Mammary epithelial cell (primary cell): ENCODE measurements at regions of chr15 and their contacts with region 1.

Region 1: DNA sequence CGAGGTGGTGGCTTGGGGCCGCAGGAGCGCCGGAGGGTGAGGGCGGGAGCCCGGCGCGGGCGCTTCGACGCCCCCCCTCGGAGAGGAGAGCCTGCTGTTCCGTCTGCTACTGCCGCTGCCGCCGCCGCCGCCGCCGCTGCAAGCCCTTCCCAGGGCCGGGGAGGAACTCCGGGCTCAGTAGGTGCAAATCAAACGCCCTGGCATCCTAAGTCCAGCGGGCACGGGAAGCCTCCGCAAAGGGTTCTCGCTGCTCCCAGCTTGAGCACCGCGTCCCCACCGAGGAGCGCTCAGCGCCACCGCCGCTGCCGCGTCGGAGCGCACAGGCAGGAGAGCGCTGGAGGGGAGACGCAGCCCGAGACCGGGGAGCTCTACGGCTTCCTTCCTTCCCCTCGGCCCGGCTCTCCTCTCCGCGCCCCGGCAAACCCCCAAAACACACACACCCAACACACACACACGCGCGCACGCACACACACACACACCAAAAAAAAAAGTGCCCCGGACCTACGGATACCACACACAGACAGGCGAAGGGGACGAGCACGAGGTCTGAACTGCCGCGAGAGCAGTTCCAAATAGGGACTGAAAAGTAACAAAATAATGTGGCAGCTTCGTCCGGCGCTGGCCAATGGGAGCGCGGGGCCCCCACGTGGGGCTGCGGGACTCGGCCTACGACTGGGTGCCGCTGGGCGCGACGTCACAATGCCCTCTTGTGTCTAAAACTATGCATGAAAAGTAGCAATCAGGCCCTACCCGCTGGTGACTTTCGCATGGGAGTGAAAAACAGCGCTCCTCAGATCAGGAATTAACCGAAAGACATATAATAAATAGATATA is at the start of gene TLE3:
- DNase-seq: peak; percentile 98
- H3K4me3 ChIP-seq: peak within 1 kb of the TSS; percentile 64 to 98 (median 70)
- H3K27ac ChIP-seq: peak within 1 kb of the TSS; percentile 81
- H3K4me1 ChIP-seq: peaks cover 41% of the 10 kb centered on the region
- H3K27me3 ChIP-seq: peaks cover 8% of the 10 kb centered on the region
- CTCF ChIP-seq: peak; percentile 2 to 43
- total RNA-seq, gene TLE3: 27.6 to 32.0 TPM

Region 2: DNA sequence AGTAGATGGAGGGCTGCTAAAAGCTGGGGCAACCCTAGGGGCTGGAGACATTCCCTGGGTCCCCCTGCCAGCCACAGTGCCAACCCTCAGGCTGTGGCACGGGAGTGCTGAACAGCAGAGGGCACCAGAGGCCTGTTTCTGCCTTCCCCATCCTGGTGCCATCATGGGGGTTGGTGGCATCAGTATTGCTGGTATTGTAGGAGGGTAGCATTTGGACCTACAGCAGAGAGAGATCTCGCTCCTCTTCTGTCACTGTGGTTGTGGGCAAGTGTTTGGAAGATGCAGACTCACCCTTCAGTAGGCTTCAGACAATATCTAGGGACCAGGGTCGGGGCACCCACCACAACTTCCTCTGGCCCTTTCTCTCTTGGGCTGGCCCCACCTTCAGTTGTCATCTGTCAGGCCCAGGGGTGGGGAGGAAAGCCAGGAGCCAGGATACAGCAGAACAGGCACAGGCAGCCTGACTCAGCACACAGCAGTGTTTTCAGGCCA is 521.5 kb before region 1 on chr15:
- CTCF ChIA-PET with region 1: no interaction called
- dilution Hi-C with region 1: no loop called
- in situ Hi-C with region 1: no loop called
- intact Hi-C with region 1: loop called (anchors 1 kb)
- DNase-seq: peak; percentile 19
- H3K4me3 ChIP-seq: no peak overlapping the region
- H3K27ac ChIP-seq: no peak overlapping the region
- H3K4me1 ChIP-seq: no peaks in the 10 kb centered on the region
- H3K27me3 ChIP-seq: no peaks in the 10 kb centered on the region
- CTCF ChIP-seq: peak; percentile 64 to 92

Region 3: DNA sequence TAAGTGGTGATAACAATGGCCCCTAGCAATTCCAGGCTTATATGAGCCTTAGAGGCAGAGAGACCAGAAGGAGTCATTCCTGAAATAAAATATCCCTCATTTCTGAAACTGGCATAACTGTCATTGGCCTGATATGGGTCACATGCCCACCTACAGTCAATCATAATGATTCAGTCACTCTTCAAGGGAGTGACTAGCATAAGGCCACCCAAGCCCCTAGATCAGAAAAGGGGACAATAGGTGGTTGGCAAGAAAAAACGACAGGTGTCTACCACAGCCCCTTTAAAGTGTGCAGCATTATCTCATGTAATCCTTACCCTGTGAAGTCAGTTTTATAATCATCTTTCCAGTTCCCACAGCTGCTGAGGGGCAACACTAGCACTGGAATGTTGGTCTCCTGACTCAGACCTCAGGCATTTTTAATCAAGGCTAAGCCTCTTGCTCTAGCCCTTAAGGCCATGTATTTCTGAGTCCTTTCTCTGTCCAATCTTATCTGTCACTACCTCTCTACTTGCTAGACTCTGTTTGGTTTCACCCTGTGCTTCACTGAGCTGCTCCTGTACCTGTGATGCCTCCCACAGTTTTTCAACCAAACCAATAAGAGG is 171.6 kb before region 1 on chr15:
- CTCF ChIA-PET with region 1: no interaction called
- dilution Hi-C with region 1: no loop called
- in situ Hi-C with region 1: no loop called
- intact Hi-C with region 1: no loop called
- DNase-seq: no peak
- H3K4me3 ChIP-seq: no peak overlapping the region
- H3K27ac ChIP-seq: no peak overlapping the region
- H3K4me1 ChIP-seq: no peaks in the 10 kb centered on the region
- H3K27me3 ChIP-seq: no peaks in the 10 kb centered on the region
- CTCF ChIP-seq: no peak

Region 4: DNA sequence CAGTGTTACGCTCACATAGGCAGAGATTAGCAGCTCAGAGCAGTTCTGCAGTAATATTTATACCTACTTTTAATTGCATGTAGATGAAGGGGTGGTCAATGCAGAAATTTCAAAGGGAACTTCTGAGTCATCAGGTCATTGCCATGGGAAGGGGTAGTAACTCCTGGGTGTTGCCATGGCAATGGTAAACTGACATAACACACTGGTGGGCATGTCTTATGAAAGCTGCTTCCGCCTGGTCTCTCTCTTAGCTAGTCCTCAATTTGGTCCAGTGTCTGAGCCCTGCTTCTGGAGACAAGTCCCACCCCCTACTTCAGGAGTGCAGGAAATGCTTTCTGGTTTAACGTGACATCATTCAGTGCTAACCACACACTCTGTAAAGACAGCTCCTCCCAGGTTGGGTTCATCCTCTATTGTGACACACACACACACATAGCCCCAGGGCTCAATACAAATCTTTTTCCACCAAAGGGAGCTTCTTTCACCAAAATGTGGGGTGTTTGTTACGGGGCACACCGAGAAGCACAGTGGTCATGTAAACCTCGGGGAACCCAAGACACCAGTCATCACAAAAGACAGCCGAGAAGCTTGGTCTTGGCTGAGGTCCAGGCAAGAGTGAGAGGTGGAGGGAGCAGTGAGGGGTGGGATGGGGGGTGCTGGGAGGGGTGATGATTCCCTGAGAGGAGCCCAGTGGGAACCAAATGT is 74.3 kb before region 1 on chr15:
- CTCF ChIA-PET with region 1: no interaction called
- dilution Hi-C with region 1: no loop called
- in situ Hi-C with region 1: no loop called
- intact Hi-C with region 1: loop called (anchors 2 kb)
- DNase-seq: peak; percentile 89
- H3K4me3 ChIP-seq: no peak overlapping the region
- H3K27ac ChIP-seq: peak overlapping the region; percentile 38
- H3K4me1 ChIP-seq: peaks cover 24% of the 10 kb centered on the region
- H3K27me3 ChIP-seq: peaks cover 11% of the 10 kb centered on the region
- CTCF ChIP-seq: no peak

Region 5: GRCh38 chr15:70142322-70143191 is 45.0 kb after region 1 on chr15:
- CTCF ChIA-PET with region 1: no interaction called
- dilution Hi-C with region 1: no loop called
- in situ Hi-C with region 1: no loop called
- intact Hi-C with region 1: no loop called
- DNase-seq: no peak
- H3K4me3 ChIP-seq: no peak overlapping the region
- H3K27ac ChIP-seq: no peak overlapping the region
- H3K4me1 ChIP-seq: no peaks in the 10 kb centered on the region
- H3K27me3 ChIP-seq: peaks cover 8% of the 10 kb centered on the region
- CTCF ChIP-seq: no peak

Region 6: DNA sequence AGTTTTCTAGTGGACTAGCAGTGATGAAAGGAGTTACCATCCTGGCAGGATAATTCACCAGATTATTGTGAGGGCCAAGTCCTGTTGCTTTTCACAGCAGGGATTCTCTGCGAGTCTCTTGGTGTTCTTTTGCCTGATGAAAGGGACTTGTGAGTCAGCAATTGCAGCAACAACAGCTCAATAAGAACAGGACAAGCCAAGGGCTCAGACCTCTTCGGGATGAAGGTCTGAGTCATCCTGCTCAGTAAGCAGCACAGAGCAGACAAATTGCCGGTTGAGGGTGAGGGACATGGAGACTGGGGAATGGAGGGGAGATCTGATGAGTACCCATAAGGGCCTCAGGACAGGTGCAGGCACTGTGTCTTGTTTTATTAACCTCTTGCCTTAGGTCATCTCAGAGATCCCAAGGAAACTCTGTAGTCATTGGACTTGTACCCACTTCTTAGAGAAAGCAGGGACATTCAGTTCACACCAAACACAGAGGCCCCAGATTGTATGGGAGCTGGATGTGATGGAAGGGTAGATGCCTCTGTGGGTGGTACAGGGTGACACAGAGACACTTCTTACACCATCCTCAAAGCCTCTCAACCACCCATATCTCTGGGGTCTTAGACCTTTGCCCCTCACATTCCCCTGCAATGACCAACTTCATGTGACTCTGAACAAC is 174.0 kb after region 1 on chr15:
- CTCF ChIA-PET with region 1: interaction called, 4 read pairs
- dilution Hi-C with region 1: no loop called
- in situ Hi-C with region 1: no loop called
- intact Hi-C with region 1: loop called (anchors 5 kb)
- DNase-seq: peak; percentile 93
- H3K4me3 ChIP-seq: no peak overlapping the region
- H3K27ac ChIP-seq: no peak overlapping the region
- H3K4me1 ChIP-seq: peaks cover 29% of the 10 kb centered on the region
- H3K27me3 ChIP-seq: no peaks in the 10 kb centered on the region
- CTCF ChIP-seq: no peak

Region 7: GRCh38 chr15:70474471-70475396 is 377.2 kb after region 1 on chr15:
- CTCF ChIA-PET with region 1: no interaction called
- dilution Hi-C with region 1: no loop called
- in situ Hi-C with region 1: loop called in 1 of 2 experiments (anchors 25 kb)
- intact Hi-C with region 1: loop called (anchors 2 kb)
- DNase-seq: peak; percentile 98
- H3K4me3 ChIP-seq: peak overlapping the region in 2 of 3 experiments; percentile 2 to 29
- H3K27ac ChIP-seq: peak overlapping the region; percentile 58
- H3K4me1 ChIP-seq: peaks cover 31% of the 10 kb centered on the region
- H3K27me3 ChIP-seq: peaks cover 7% of the 10 kb centered on the region
- CTCF ChIP-seq: no peak

Region 8: GRCh38 chr15:70512772-70513362 is 415.3 kb after region 1 on chr15:
- CTCF ChIA-PET with region 1: no interaction called
- dilution Hi-C with region 1: no loop called
- in situ Hi-C with region 1: no loop called
- intact Hi-C with region 1: loop called (anchors 1 kb)
- DNase-seq: peak; percentile 59
- H3K4me3 ChIP-seq: no peak overlapping the region
- H3K27ac ChIP-seq: no peak overlapping the region
- H3K4me1 ChIP-seq: peaks cover 18% of the 10 kb centered on the region
- H3K27me3 ChIP-seq: peaks cover 9% of the 10 kb centered on the region
- CTCF ChIP-seq: peak; percentile 94 to 96